PC-9 (cell line): ENCODE measurements at regions of chr10 and their contacts with region 1.

Region 1: DNA sequence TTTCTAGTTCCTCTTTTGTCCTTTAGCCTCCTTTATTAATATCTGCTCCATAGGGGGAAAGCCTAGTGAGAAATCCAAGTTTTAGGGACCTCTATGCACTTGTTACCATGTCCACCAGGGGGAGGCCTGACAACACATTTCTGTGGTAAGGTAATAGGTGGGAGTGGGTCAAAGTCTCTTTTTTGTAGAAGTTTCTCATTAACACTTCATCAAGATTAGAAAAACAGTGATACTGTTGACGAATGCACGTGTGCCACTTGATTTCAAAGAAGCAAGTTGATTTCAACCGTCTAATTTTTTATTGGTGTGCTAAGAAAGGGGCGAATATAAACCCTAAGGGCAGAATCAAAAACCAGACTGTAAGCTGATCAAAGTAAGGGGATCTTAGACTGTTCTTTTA is 30.6 kb downstream of the CISD1 start:
- DNase-seq: peak; percentile 48 to 54
- H3K4me3 ChIP-seq: no peak overlapping the region
- H3K27ac ChIP-seq: no peak overlapping the region
- H3K4me1 ChIP-seq: no peaks in the 10 kb centered on the region
- H3K27me3 ChIP-seq: no peaks in the 10 kb centered on the region
- CTCF ChIP-seq: peak; percentile 98

Region 2: DNA sequence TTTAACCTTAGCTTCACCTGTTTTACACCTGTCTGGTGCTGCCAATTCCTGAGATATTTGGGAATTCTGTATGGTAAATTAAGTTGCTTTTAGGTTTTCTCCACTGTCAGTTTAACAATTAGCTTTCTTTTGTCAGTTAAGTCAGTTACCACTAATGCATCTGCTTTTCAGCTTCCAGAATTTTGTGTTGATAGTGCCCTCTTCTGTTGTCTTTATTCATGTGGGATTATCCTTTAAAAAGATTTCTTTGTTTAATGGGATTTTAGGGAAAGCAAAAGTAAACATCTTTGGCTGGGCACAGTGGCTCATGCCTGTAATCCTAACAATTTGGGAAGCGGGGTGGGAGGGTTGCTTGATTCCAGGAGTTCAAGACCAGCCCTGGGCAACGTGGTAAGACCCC is 93.7 kb after region 1 on chr10:
- CTCF ChIA-PET with region 1: no interaction called
- POLR2A ChIA-PET with region 1: no interaction called
- intact Hi-C with region 1: loop called (anchors 2 kb)
- DNase-seq: no peak
- H3K4me3 ChIP-seq: no peak overlapping the region
- H3K27ac ChIP-seq: no peak overlapping the region
- H3K4me1 ChIP-seq: no peaks in the 10 kb centered on the region
- H3K27me3 ChIP-seq: no peaks in the 10 kb centered on the region
- CTCF ChIP-seq: peak; percentile 26; the same call in 1 of the 2 replicates